AG04449 (cell line): ENCODE measurements at regions of chr16 and their contacts with region 1.

Region 1: GRCh38 chr16:77971306-77972271 is 50.8 kb upstream of the CLEC3A start:
- DNase-seq: peak; percentile 59
- H3K4me3 ChIP-seq: no peak overlapping the region
- CTCF ChIP-seq: peak; percentile 78

Region 2: GRCh38 chr16:77684181-77684526 is 287.4 kb before region 1 on chr16:
- CTCF ChIA-PET with region 1: interaction called, 22 read pairs
- POLR2A ChIA-PET with region 1: no interaction called
- DNase-seq: no peak
- H3K4me3 ChIP-seq: no peak overlapping the region
- CTCF ChIP-seq: no peak

Region 3: GRCh38 chr16:77782694-77783093 is 188.9 kb before region 1 on chr16:
- CTCF ChIA-PET with region 1: interaction called, 14 read pairs
- POLR2A ChIA-PET with region 1: no interaction called
- DNase-seq: no peak
- H3K4me3 ChIP-seq: no peak overlapping the region
- CTCF ChIP-seq: peak; percentile 51

Region 4: DNA sequence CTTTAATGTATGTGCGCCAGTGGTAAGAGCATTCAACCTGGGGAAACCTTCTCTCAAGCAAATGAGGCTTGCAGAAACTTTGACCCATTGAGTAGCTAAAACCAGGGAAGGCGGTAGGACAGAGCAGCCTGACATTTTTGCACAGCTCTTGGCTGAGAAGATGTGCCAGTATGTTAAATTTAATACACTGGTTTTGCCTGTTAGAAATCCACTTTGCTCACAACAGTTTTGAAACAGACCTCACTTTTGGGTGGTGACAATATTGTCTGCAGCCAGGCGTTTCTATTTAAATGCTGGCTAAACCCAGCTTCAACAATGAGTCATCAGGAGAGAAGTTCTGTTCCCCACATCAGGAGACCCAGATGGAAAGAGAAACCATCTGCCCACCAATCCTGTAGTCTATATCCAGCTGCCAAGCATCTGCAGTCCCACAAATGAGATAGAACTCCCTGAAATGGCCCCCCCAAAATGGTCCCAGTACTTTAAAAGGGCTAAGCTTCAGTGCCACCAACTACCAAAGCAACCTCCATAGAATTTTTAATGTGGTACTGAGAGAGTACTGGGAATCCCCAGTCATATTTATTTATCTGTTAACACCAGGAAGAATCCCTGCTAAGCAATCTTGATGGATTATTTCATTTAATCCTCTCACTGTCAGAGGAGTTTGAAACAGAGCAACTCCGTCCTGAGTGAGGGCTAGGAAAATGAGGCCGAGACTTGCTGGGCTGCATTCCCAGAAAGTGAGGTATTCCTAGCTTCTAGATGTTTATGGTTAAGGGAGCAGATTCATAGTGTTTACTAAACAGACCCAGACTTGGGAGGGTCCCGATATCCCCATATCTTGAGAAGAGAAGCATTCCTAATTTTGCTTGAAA is 21.8 kb after region 1 on chr16:
- CTCF ChIA-PET with region 1: interaction called, 10 read pairs
- POLR2A ChIA-PET with region 1: no interaction called
- DNase-seq: peak; percentile 16
- H3K4me3 ChIP-seq: no peak overlapping the region; the same call in 1 of the 2 replicates
- CTCF ChIP-seq: no peak

Region 5: DNA sequence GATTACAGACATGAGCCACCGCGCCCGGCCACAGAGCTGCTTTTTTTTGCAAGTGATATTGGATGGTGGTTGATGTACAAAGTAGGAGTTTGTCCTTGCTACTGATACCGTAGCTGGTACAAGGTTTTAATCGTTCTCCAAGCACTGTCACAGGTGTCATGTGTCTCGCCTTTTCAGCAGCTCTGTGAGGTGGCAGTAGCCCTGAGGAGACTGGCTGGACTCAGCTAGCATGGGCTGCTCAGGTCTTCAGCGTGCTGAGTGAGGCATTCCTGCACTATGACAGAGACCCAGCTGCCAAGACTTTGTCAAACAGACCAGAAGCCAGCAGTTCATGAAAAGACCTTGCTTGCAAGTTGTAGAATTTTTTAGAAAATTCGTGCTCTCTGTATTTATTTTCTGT is 135.1 kb after region 1 on chr16:
- CTCF ChIA-PET with region 1: no interaction called
- POLR2A ChIA-PET with region 1: no interaction called
- DNase-seq: no peak
- H3K4me3 ChIP-seq: no peak overlapping the region
- CTCF ChIP-seq: no peak